ENCODE measurements at regions of chr7 and their contacts with region 1.

Region 1: GRCh38 chr7:42745357-42746059 is 166.4 kb downstream of the C7orf25 start:
- DNase-seq: no peak
- H3K4me3 ChIP-seq: no peak overlapping the region
- H3K27ac ChIP-seq: no peak overlapping the region
- H3K4me1 ChIP-seq: no peaks in the 10 kb centered on the region
- H3K27me3 ChIP-seq: no peaks in the 10 kb centered on the region
- CTCF ChIP-seq: peak; percentile 66 to 81

Region 2: GRCh38 chr7:42812779-42813178 is 67.3 kb after region 1 on chr7:
- CTCF ChIA-PET with region 1: no interaction called
- dilution Hi-C with region 1: no loop called
- in situ Hi-C with region 1: no loop called
- intact Hi-C with region 1: loop called (anchors 10 kb)
- DNase-seq: no peak
- H3K4me3 ChIP-seq: no peak overlapping the region
- H3K27ac ChIP-seq: no peak overlapping the region
- H3K4me1 ChIP-seq: no peaks in the 10 kb centered on the region
- H3K27me3 ChIP-seq: no peaks in the 10 kb centered on the region
- CTCF ChIP-seq: no peak

Region 3: GRCh38 chr7:43058271-43059066 is 313.0 kb after region 1 on chr7:
- CTCF ChIA-PET with region 1: no interaction called
- dilution Hi-C with region 1: no loop called
- in situ Hi-C with region 1: no loop called
- intact Hi-C with region 1: no loop called
- DNase-seq: no peak
- H3K4me3 ChIP-seq: no peak overlapping the region
- H3K27ac ChIP-seq: no peak overlapping the region
- H3K4me1 ChIP-seq: no peaks in the 10 kb centered on the region
- H3K27me3 ChIP-seq: no peaks in the 10 kb centered on the region
- CTCF ChIP-seq: no peak